Activated naive CD4-positive, alpha-beta T cell treated with anti-CD3 and anti-CD28 coated beads for 36 hours (primary cell): ENCODE measurements at regions of chr3 and their contacts with region 1.

Region 1: GRCh38 chr3:42674146-42674545 is 11.2 kb upstream of the KLHL40 start:
- DNase-seq: no peak
- H3K4me3 Mint-ChIP-seq: no peak overlapping the region
- H3K27ac Mint-ChIP-seq: no peak overlapping the region
- H3K4me1 Mint-ChIP-seq: peaks cover 2% of the 10 kb centered on the region
- H3K27me3 Mint-ChIP-seq: peaks cover 3% of the 10 kb centered on the region

Region 2: DNA sequence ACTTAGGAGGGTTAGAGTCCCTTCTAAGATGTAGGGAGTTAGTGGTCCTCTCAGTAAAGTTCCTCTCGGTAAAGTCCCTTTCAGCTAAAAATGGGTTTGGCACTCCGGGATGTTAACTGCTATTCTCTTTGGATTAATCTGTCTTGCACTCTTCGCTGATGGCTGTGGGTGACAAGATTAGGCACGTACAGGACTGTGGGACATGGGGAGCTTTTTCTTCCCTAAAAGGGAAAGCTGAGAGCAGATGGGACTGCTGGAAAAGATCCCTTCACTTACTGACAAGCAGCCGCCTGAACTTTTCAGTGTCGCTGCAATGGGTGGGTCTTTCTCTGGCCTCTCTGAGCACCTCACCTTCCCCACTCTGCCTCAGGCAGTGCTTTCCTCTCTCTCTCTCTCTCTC is 44.9 kb after region 1 on chr3:
- CTCF ChIA-PET with region 1: no interaction called
- intact Hi-C with region 1: loop called (anchors 2 kb)
- DNase-seq: no peak
- H3K4me3 Mint-ChIP-seq: no peak overlapping the region
- H3K27ac Mint-ChIP-seq: no peak overlapping the region
- H3K4me1 Mint-ChIP-seq: no peaks in the 10 kb centered on the region
- H3K27me3 Mint-ChIP-seq: peaks cover 2% of the 10 kb centered on the region